Mammary epithelial cell (primary cell): ENCODE measurements at regions of chr17 and their contacts with region 1.

Region 1: DNA sequence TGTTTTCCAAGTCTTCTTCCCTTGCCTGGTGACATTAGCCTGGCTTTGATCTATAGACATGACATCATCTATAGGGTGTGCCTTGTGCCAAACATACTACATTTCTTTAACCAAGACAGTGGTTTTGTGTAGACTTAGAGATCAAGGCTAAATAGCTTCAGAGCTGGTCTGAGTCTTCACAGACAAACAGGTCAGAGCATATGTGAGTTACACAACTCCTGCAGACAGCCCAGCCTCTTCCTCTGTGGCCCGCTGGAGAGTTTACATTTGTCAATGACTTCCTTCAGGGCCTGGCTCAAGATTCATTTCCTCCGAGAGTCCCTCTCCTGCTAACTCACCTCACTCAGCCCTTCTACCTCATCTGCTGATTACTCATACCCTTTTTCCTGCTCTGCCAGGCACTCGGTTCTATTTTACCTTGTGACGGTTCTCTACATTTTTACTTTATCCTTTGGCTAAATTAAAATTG is 73.1 kb upstream of the TANC2 start:
- DNase-seq: peak; percentile 98
- H3K4me3 ChIP-seq: no peak overlapping the region
- H3K27ac ChIP-seq: peak overlapping the region; percentile 82
- H3K4me1 ChIP-seq: peaks cover 40% of the 10 kb centered on the region
- H3K27me3 ChIP-seq: no peaks in the 10 kb centered on the region
- CTCF ChIP-seq: no peak

Region 2: GRCh38 chr17:62808196-62808930 is 84.5 kb before region 1 on chr17 and contains the start of gene MARCHF10:
- CTCF ChIA-PET with region 1: no interaction called
- dilution Hi-C with region 1: no loop called
- in situ Hi-C with region 1: no loop called
- intact Hi-C with region 1: no loop called
- DNase-seq: no peak
- H3K4me3 ChIP-seq: peak within 1 kb of the TSS in 1 of 3 experiments; percentile 28
- H3K27ac ChIP-seq: no peak within 1 kb of the TSS
- H3K4me1 ChIP-seq: peaks cover 13% of the 10 kb centered on the region
- H3K27me3 ChIP-seq: no peaks in the 10 kb centered on the region
- CTCF ChIP-seq: no peak
- total RNA-seq, gene MARCHF10: under 0.01 TPM in 1 of 2 donors, not detected in the other

Region 3: GRCh38 chr17:62865586-62865985 is 27.3 kb before region 1 on chr17:
- CTCF ChIA-PET with region 1: no interaction called
- dilution Hi-C with region 1: no loop called
- in situ Hi-C with region 1: no loop called
- intact Hi-C with region 1: loop called (anchors 2 kb)
- DNase-seq: no peak
- H3K4me3 ChIP-seq: no peak overlapping the region
- H3K27ac ChIP-seq: no peak overlapping the region
- H3K4me1 ChIP-seq: no peaks in the 10 kb centered on the region
- H3K27me3 ChIP-seq: no peaks in the 10 kb centered on the region
- CTCF ChIP-seq: no peak

Region 4: DNA sequence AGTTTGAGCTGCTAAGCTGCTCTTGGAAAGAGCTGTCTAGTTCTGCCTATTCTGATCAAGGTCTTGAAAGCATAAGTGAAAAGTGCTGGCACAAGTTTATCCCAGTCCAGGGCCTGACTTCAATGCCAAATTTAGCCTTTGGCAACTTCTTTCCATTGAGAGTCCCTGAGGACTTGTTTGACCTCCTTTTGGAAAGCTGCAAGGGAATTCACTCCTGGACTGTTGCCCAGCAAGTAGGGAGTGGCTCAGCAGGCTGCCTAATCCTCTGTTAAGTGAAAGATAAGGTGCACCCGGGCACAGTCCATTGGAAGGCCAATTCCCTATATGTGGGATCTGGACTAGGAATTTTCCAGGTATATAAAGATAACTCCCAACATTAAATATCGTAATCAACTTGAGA is 57.2 kb after region 1 on chr17:
- CTCF ChIA-PET with region 1: no interaction called
- dilution Hi-C with region 1: no loop called
- in situ Hi-C with region 1: loop called in 1 of 2 experiments (anchors 10 kb)
- intact Hi-C with region 1: no loop called
- DNase-seq: peak; percentile 52
- H3K4me3 ChIP-seq: no peak overlapping the region
- H3K27ac ChIP-seq: no peak overlapping the region
- H3K4me1 ChIP-seq: peaks cover 5% of the 10 kb centered on the region
- H3K27me3 ChIP-seq: no peaks in the 10 kb centered on the region
- CTCF ChIP-seq: no peak